HepG2 (cell line): ENCODE measurements at regions of chr9 and their contacts with region 1.

Region 1: DNA sequence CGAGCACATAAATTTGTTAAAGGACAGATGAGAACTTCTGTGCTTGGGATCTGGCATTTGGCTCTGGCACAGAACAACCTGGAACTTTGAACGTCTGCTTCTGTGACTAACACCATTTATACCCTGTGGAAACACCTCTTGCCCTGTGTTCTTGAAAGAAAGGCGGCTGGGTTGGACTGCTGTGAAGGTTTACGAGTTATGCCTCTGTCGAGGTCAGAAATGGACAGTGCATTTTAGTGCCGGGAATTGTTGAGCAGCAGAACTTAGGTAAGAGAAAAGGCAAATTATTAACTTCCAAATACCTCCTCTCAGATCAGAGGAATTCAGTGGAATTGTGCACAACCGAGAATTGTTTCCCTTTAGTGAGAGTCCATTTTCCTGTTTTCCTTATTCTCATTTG is 14.1 kb upstream of the INIP start:
- DNase-seq: peak; percentile 92
- ATAC-seq: peak; percentile 95
- H3K4me3 ChIP-seq: peak overlapping the region; percentile 40 to 60 (median 58); a peak in 4 of 6 replicates
- H3K27ac ChIP-seq: peak overlapping the region; percentile 84
- H3K4me1 ChIP-seq: peaks cover 26% of the 10 kb centered on the region
- H3K27me3 ChIP-seq: no peaks in the 10 kb centered on the region
- CTCF ChIP-seq: no peak
- EP300 ChIP-seq: peak in 1 of 2 experiments; percentile 55; a peak in 1 of 4 replicates
- POLR2A ChIP-seq: peak; percentile 38 to 64; a peak in 3 of 4 replicates
- RAD21 ChIP-seq: no peak

Region 2: DNA sequence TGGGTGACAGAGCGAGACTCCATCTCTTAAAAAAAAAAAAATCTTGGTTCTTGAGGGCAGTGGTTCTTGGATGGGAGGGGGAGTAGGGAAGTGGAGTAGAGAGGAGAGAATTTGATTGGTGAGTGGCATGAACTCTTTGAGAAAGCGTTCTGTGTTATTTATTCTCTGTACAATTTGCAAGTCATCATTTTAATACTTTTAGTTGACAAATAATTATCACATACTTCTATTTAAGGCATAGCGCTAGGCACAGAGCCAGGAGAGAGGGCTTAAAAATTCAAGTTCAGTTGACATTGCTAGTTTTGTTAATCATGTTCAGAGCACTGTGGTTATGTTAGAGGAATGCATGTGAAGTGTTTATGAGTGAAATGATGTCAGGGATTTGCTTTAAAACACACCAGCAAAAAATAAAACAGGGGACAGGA is 327.5 kb before region 1 on chr9:
- CTCF ChIA-PET with region 1: no interaction called
- POLR2A ChIA-PET with region 1: no interaction called
- in situ Hi-C with region 1: no loop called
- intact Hi-C with region 1: no loop called
- DNase-seq: no peak
- ATAC-seq: no peak
- H3K4me3 ChIP-seq: no peak overlapping the region
- H3K27ac ChIP-seq: no peak overlapping the region
- H3K4me1 ChIP-seq: peaks cover 24% of the 10 kb centered on the region
- H3K27me3 ChIP-seq: no peaks in the 10 kb centered on the region
- CTCF ChIP-seq: no peak
- EP300 ChIP-seq: no peak
- POLR2A ChIP-seq: no peak
- RAD21 ChIP-seq: no peak

Region 3: DNA sequence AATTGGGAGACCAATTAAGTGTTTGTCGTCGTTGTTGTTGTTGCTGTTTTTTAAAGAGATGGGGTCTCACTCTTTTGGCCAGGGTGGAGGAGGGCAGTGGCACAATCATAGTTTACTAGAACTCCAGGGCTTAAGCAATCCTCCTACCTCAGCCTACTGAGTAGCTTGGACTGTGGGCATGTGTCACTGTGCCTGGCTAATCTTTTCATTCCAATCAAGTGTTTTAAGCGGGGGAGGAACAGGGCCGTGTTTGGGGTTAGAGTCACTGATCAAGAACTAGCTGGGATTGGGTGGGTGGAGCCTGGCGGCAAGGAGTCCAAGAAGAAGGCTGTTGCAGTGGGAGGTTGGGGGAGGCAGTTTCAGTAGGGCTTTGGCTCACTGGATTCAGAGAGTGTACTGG is 32.4 kb after region 1 on chr9:
- CTCF ChIA-PET with region 1: no interaction called
- POLR2A ChIA-PET with region 1: interaction called, 14 read pairs
- in situ Hi-C with region 1: no loop called
- intact Hi-C with region 1: no loop called
- DNase-seq: peak; percentile 37
- ATAC-seq: peak; percentile 76
- H3K4me3 ChIP-seq: peak overlapping the region; percentile 32 to 63 (median 35); a peak in 5 of 6 replicates
- H3K27ac ChIP-seq: peak overlapping the region; percentile 67
- H3K4me1 ChIP-seq: peaks cover 38% of the 10 kb centered on the region
- H3K27me3 ChIP-seq: no peaks in the 10 kb centered on the region
- CTCF ChIP-seq: no peak
- EP300 ChIP-seq: no peak
- POLR2A ChIP-seq: no peak
- RAD21 ChIP-seq: no peak